ENCODE measurements at regions of chr19 and their contacts with region 1.

Region 1: GRCh38 chr19:53195265-53195903 is 2.2 kb upstream of the ZNF665 start:
- DNase-seq: peak; percentile 63 to 74 (median 72)
- H3K4me3 ChIP-seq: no peak overlapping the region
- H3K4me3 Mint-ChIP-seq: peak overlapping the region in 1 of 2 donors; percentile 20
- H3K27ac ChIP-seq: no peak overlapping the region
- H3K27ac Mint-ChIP-seq: no peak overlapping the region
- H3K4me1 ChIP-seq: peaks cover 22 to 23% of the 10 kb centered on the region in 2 donors
- H3K4me1 Mint-ChIP-seq: peaks cover 23% of the 10 kb centered on the region
- H3K27me3 ChIP-seq: no peaks in the 10 kb centered on the region
- H3K27me3 Mint-ChIP-seq: peaks cover 3 to 11% (median 4%) of the 10 kb centered on the region in 3 donors
- CTCF ChIP-seq: peak; percentile 88

Region 2: DNA sequence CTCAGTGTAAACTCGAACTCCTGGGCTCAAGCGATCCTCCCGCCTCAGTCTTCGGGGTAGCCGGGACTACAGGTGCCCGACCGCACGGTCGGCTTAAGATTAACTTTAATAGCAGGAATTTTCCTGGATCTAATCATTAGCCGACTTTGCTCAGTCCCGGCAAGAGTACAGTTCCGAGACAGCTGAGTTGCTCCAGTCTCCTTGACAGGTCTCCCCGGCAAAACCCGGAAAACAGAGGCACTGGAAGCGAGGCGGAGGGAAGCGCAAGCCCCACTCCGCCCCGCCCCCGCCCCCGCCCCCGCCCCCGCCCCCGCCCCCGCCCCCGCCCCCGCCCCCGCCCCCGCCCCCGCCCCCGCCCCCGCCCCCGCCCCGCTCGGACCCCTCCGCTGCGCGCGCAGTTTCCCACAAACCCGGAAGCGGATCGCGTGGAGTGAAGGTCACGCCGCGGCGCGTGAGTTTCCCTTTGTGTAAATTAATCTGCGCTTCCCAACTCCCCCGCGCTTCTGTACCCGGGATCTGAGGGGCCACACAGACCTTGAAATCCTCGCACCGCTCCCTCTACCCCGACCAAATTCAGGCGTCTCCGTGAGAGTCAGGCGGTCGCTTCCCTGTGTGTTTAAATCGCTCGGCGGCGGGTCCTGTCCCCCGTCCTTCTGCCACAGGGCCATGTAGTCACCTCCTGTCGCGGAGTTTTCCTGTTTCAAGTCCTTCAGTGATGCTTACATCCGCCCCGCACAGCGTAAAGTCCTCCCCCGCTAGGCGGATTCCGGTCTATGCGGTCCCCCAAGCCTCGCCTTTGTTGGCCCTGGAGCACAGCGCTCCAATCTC is 898.4 kb before region 1 on chr19 and contains the start of gene ZNF480:
- intact Hi-C with region 1: loop called in 1 of 2 experiments (anchors 5 kb)
- DNase-seq: peak; percentile 80 to 86 (median 82)
- H3K4me3 ChIP-seq: peak within 1 kb of the TSS; percentile 93 to 99 (median 94)
- H3K4me3 Mint-ChIP-seq: peak within 1 kb of the TSS; percentile 95 to 97
- H3K27ac ChIP-seq: peak within 1 kb of the TSS; percentile 88 to 94
- H3K27ac Mint-ChIP-seq: peak within 1 kb of the TSS; percentile 91 to 98 (median 94)
- H3K4me1 ChIP-seq: peaks cover 15 to 18% of the 10 kb centered on the region in 2 donors
- H3K4me1 Mint-ChIP-seq: peaks cover 17% of the 10 kb centered on the region
- H3K27me3 ChIP-seq: no peaks in the 10 kb centered on the region
- H3K27me3 Mint-ChIP-seq: peaks cover 0 to 1% (median 0%) of the 10 kb centered on the region in 3 donors
- CTCF ChIP-seq: no peak
- polyA plus RNA-seq, gene ZNF480: 6.6 to 7.6 (median 7.4) TPM

Region 3: DNA sequence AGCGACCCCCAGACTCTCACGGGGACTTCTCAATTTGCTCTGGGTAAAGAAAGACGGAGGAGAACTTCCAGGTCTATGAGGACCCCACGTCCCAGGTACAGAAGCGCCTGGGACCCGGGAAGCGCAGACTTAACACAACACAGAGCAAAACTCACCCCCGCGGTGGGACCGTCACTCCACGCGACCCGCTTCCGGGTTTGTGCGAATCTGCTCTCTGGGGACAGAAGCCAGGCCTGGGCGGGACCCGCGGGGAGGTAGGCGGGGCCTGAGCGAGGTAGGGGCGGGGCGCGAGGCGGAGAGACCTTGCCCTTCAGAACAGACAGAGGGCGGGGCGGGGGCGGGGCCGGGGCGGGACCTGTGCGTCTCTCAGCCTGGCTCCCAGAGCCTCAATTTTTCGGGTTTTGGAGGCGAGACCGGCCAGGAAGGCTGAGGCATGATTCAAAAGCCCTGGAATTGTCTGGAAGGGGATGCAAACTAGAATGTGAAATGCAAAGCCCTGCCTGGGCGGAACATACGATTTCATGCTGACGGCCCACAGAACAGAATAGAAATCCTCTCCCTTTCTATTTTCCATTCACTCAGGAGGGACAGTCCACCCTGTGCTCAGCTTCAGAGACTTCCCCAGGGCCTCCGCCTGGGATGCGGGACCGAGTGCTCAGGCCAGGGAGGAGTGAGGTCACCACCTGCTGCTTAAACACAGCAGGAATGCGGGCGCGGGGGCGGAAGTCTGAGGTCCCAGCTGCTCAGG is 252.8 kb before region 1 on chr19:
- intact Hi-C with region 1: loop called in 1 of 2 experiments (anchors 5 kb)
- DNase-seq: peak; percentile 87 to 89 (median 88)
- H3K4me3 ChIP-seq: peak overlapping the region; percentile 75 to 99 (median 91)
- H3K4me3 Mint-ChIP-seq: peak overlapping the region; percentile 95 to 100
- H3K27ac ChIP-seq: peak overlapping the region; percentile 47 to 92
- H3K27ac Mint-ChIP-seq: peak overlapping the region; percentile 84 to 95 (median 93)
- H3K4me1 ChIP-seq: peaks cover 25 to 42% of the 10 kb centered on the region in 2 donors
- H3K4me1 Mint-ChIP-seq: peaks cover 47% of the 10 kb centered on the region
- H3K27me3 ChIP-seq: no peaks in the 10 kb centered on the region
- H3K27me3 Mint-ChIP-seq: peaks cover 3 to 10% (median 9%) of the 10 kb centered on the region in 3 donors
- CTCF ChIP-seq: no peak

Region 4: DNA sequence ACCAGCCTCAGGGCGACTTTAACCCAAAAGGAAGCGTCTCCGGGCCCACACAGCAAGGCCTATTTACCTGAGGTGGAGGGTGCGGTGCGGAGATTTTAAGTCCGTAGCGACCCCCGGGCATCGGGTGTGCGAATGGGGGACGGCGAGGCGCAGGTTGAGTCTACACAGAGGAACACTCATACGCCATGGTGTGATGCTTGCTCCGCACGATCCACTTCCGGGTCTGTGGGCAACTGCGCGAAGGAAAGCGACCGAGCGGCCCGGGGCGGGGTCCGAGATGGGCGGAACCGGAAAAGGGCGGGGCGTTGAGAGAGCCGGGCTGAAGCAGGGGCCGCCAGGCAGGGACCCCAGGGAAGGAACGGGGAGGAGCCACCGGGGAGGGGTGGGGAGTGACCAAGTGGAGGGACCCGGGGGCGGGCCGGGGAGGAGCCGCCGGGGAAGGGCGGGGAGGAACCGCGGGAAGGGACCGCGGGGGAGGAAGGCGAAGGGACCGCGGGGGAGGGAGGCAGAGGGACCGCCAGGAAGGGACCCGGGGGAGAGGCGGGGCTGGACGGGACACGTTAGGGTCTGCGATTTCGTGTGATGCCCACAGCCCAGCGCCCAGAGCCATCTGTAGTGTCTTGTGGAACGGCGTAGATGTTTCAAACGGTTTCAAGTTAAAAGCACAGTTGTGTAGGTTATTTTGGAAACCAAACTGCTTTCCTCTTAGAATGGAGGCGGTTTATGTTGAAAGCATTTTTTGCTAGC is 92.0 kb before region 1 on chr19 and contains the start of gene ZNF160:
- intact Hi-C with region 1: loop called (anchors 2 to 5 kb)
- DNase-seq: peak; percentile 92 to 97 (median 92)
- H3K4me3 ChIP-seq: peak within 1 kb of the TSS; percentile 57 to 95 (median 93)
- H3K4me3 Mint-ChIP-seq: peak within 1 kb of the TSS; percentile 90 to 92
- H3K27ac ChIP-seq: peak within 1 kb of the TSS; percentile 89 to 93
- H3K27ac Mint-ChIP-seq: peak within 1 kb of the TSS; percentile 86 to 96 (median 93)
- H3K4me1 ChIP-seq: peaks cover 19 to 24% of the 10 kb centered on the region in 2 donors
- H3K4me1 Mint-ChIP-seq: peaks cover 17% of the 10 kb centered on the region
- H3K27me3 ChIP-seq: no peaks in the 10 kb centered on the region
- H3K27me3 Mint-ChIP-seq: peaks cover 2 to 9% (median 4%) of the 10 kb centered on the region in 3 donors
- CTCF ChIP-seq: no peak
- polyA plus RNA-seq, gene ZNF160: 6.4 to 24.5 (median 7.7) TPM

Region 5: DNA sequence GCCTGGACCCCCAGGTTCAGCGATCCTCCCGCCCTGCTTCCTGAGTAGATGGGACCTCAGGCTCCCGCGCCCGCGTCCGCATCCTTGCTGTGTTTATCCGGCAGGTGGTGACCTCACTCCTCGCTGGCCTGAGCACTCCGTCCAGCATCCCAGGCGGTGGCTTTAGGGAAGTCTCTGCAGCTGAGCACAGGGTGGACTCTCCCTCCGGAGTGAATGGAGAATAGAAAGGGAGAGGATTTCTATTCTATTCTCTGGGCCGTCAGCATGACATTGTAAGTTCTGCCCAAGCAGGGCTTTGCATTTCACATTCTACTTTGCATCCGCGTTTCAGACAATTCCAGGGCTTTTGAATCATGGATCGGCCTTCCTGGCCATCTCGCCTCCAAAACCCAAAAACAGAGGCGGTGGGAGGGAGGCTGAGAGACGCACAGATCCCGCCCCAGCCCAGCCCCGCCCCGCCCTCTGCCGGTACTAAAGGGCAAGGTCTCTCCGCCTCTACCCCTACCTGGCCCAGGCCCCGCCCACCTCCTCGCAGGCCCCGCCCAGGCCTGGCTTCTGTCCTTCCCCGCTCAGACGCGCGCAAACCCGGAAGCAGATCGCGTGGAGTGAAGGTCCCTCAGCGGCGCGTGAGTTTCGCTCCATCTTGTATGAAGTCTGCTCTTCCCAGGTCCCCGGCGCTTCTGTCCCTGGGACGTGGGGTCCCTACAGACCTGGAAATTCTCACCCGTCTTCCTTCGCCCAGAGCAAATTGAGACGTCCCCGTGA is 169.9 kb after region 1 on chr19 and contains the start of gene ZNF525:
- intact Hi-C with region 1: loop called in 1 of 2 experiments (anchors 10 kb)
- DNase-seq: peak; percentile 76 to 85 (median 81)
- H3K4me3 ChIP-seq: peak within 1 kb of the TSS; percentile 79 to 94 (median 93)
- H3K4me3 Mint-ChIP-seq: peak within 1 kb of the TSS; percentile 93 to 95
- H3K27ac ChIP-seq: peak within 1 kb of the TSS; percentile 30 to 76
- H3K27ac Mint-ChIP-seq: peak within 1 kb of the TSS; percentile 60 to 88 (median 83)
- H3K4me1 ChIP-seq: peaks cover 10 to 23% of the 10 kb centered on the region in 2 donors
- H3K4me1 Mint-ChIP-seq: peaks cover 18% of the 10 kb centered on the region
- H3K27me3 ChIP-seq: no peaks in the 10 kb centered on the region
- H3K27me3 Mint-ChIP-seq: peaks cover 6 to 9% (median 7%) of the 10 kb centered on the region in 3 donors
- CTCF ChIP-seq: peak; percentile 15
- polyA plus RNA-seq, gene ZNF525: 0.29 to 2.0 (median 0.64) TPM

Region 6: GRCh38 chr19:53467485-53468262 is 272.3 kb after region 1 on chr19 and contains the start of gene ZNF813:
- intact Hi-C with region 1: loop called (anchors 1 to 5 kb)
- DNase-seq: peak; percentile 85 to 93 (median 89)
- H3K4me3 ChIP-seq: peak within 1 kb of the TSS; percentile 74 to 92 (median 86)
- H3K4me3 Mint-ChIP-seq: peak within 1 kb of the TSS; percentile 89 to 92
- H3K27ac ChIP-seq: peak within 1 kb of the TSS; percentile 65 to 86
- H3K27ac Mint-ChIP-seq: peak within 1 kb of the TSS; percentile 86 to 91 (median 89)
- H3K4me1 ChIP-seq: peaks cover 12 to 13% of the 10 kb centered on the region in 2 donors
- H3K4me1 Mint-ChIP-seq: peaks cover 20% of the 10 kb centered on the region
- H3K27me3 ChIP-seq: peaks cover 2 to 19% of the 10 kb centered on the region in 2 donors
- H3K27me3 Mint-ChIP-seq: peaks cover 17 to 31% (median 24%) of the 10 kb centered on the region in 3 donors
- CTCF ChIP-seq: no peak
- polyA plus RNA-seq, gene ZNF813: 0.32 to 1.9 (median 0.61) TPM

Measured in CD14-positive monocyte (primary cell).